ENCODE measurements at regions of chr9 and their contacts with region 1.

Region 1: GRCh38 chr9:655875-656274 is 185.6 kb upstream of the DMRT1 start:
- H3K4me3 Mint-ChIP-seq: no peak overlapping the region
- H3K27ac Mint-ChIP-seq: peak overlapping the region; percentile 51
- H3K4me1 Mint-ChIP-seq: peaks cover 50% of the 10 kb centered on the region
- H3K27me3 Mint-ChIP-seq: no peaks in the 10 kb centered on the region

Region 2: GRCh38 chr9:385818-386398 is 270.0 kb before region 1 on chr9:
- intact Hi-C with region 1: no loop called
- H3K4me3 Mint-ChIP-seq: no peak overlapping the region
- H3K27ac Mint-ChIP-seq: no peak overlapping the region
- H3K4me1 Mint-ChIP-seq: no peaks in the 10 kb centered on the region
- H3K27me3 Mint-ChIP-seq: no peaks in the 10 kb centered on the region

Region 3: DNA sequence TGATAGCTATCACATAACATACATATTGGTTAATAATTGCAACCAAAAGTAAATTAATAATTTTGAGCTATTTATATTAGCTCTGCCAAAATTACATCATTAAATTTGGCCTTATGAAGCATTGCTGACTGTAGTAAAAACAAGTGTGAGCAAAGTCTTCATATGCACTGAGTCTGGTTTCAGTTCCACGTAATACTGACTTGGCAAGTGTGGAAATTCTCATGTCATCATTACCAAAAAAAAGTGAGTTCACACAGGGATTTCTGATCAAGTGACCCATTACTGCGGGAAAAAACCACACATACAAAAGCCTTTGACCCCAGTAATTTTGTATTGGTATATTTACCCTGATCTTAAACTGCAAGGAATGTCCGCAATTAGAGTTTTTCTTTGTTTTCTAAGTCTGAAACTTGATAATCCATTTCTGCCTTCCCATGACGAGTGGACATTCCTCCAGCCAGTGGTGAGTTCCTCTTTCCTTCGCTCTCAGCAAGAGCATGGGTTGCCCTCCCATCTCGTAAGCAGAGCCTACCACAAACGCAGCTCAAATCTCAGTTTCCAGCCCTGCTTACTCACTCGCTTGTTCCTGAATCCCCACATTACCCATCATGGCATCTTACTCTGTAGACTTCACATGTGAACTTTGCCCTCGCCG is 34.5 kb before region 1 on chr9:
- intact Hi-C with region 1: loop called (anchors 5 kb)
- H3K4me3 Mint-ChIP-seq: peak overlapping the region; percentile 27
- H3K27ac Mint-ChIP-seq: peak overlapping the region; percentile 81
- H3K4me1 Mint-ChIP-seq: peaks cover 28% of the 10 kb centered on the region
- H3K27me3 Mint-ChIP-seq: peaks cover 3% of the 10 kb centered on the region

Region 4: DNA sequence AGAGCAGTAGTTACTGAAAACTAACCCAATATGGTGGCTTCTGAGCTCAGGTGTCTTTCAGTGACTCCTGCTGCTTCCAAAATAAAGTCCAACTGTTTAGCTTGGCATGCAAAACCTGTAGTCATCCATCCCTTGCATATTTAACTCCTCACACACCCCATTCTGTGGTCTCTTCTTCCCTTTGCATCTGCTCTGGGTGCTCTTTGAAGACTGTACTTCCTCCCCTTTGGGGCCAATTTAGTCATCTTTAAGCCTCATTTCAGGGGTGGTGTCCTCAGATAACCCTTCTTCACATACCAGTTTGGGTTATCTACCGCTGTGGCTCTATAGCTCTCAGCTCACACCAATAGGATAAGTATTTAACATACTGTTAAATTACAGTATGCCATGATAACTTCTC is 24.3 kb before region 1 on chr9:
- intact Hi-C with region 1: loop called (anchors 1 kb)
- H3K4me3 Mint-ChIP-seq: no peak overlapping the region
- H3K27ac Mint-ChIP-seq: no peak overlapping the region
- H3K4me1 Mint-ChIP-seq: peaks cover 8% of the 10 kb centered on the region
- H3K27me3 Mint-ChIP-seq: peaks cover 2% of the 10 kb centered on the region

Measured in dendritic cell treated with granulocyte-macrophage colony-stimulating factor and Interleukin-4, amounts not matched to agents 40 ng/mL and 50 ng/mL, for 4 days (primary cell).